ENCODE measurements at regions of chr6 and their contacts with region 1.

Region 1: DNA sequence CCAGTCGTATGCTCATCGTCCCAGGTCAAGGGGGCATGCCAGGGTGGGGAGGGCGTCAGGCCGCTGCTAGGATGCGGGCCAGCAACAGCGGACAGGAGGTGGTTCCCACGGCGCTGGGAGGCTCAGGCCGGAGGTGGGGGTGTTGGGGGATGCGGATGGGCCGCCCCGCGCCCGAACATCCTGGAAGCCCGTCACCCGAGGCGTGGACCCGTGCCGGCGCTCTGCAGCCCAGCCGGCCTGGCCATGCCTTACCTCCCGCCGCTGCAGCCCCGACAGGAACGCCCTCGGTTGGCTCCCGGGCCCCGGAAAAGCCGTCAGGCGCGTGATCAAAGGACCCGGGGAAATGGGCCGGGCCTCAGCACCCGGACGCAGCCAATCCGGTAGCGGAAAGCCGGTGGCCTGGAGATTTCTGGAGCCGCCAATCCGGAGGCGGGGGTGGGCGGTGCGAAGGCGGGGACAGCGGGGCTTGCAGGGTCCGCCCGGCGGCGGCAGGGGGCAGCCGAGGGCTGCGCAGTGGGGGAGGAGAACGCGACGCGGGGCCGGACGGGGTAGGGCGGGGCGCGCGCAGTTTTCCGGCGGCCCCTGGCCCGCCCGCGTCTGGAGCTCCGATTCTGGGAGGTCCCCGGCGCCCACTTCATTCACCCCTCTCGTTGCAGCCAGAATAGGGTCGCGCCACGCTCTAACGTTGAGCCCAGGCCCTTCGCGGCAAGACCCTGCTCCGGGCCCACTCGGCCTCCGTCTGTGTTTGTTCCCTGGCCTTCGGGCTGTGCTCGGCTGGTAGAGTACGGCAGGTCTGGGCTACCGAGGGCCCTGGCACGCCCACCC is at the start of gene SMIM29:
- DNase-seq: peak; percentile 96 to 98 (median 97)
- ATAC-seq: peak; percentile 84
- H3K4me3 ChIP-seq: peak within 1 kb of the TSS; percentile 76
- H3K27ac ChIP-seq: peak within 1 kb of the TSS; percentile 88
- H3K4me1 ChIP-seq: peaks cover 36 to 50% of the 10 kb centered on the region in 2 experiments
- H3K27me3 ChIP-seq: no peaks in the 10 kb centered on the region; a peak in 1 of 5 replicates
- CTCF ChIP-seq: peak; percentile 85 to 96 (median 95)
- EP300 ChIP-seq: peak; percentile 54; the same call in 1 of the 2 replicates
- POLR2A ChIP-seq: peak; percentile 85
- RAD21 ChIP-seq: peak; percentile 97 to 99
- polyA plus RNA-seq, gene SMIM29: 13.1 to 13.7 TPM

Region 2: DNA sequence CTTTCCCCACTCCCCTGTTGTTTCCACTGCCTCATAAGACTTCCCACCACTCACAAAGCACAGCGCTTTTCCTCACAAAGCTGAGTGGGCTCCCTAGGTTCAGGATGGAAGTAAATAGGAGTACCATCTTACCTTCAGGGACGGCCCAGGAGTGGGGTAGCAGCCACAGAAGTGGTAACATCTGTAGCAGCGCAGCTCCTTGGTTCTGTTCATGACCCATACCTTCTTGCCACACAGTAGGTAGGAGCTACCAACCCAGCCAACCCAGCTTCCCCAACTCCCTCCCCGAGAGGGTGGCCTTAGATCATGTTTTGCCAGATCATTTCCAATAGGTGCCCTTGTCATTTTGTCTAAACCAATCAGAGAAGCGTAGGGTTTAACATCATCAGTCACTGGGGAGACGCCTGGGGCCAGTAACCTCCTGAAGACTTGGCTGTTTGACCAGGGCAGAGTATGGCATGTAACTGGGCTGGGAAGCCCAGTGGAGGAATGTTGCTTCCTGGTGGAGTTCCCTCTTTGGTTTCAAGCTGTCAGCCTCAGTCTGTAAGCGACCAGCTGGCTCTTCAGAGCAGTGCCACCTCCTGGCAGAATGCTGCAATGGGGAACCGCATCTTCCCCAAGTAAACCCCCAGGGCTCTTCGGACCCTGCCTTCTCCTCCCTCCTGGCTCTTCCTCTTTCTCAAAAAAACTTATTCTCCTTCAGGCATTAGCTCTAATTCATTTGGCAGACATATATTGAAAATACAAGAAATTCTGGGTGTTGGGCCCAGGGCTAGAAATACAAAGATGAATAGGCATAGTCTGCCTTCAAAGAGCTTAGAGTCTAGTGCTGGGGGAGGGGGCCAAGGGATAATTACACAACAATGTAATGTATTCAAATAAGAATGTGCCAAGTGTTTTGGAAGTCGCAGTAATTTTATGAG is 1295.9 kb before region 1 on chr6 and contains the start of gene HLA-DMA:
- CTCF ChIA-PET with region 1: no interaction called
- POLR2A ChIA-PET with region 1: no interaction called
- in situ Hi-C with region 1: no loop called
- intact Hi-C with region 1: no loop called
- DNase-seq: peak; percentile 55 to 71 (median 64)
- ATAC-seq: peak; percentile 91
- H3K4me3 ChIP-seq: no peak within 1 kb of the TSS
- H3K27ac ChIP-seq: no peak within 1 kb of the TSS
- H3K4me1 ChIP-seq: no peaks in the 10 kb centered on the region; a peak in 1 of 5 replicates
- H3K27me3 ChIP-seq: peaks cover 2 to 27% of the 10 kb centered on the region in 2 experiments; a peak in 3 of 5 replicates
- CTCF ChIP-seq: peak; percentile 67 to 80 (median 71)
- EP300 ChIP-seq: no peak
- POLR2A ChIP-seq: no peak
- RAD21 ChIP-seq: peak; percentile 21 to 46; a peak in 3 of 4 replicates
- polyA plus RNA-seq, gene HLA-DMA: 0.18 to 0.78 TPM

Region 3: GRCh38 chr6:34145161-34146020 is 103.5 kb before region 1 on chr6:
- CTCF ChIA-PET with region 1: no interaction called
- POLR2A ChIA-PET with region 1: no interaction called
- in situ Hi-C with region 1: no loop called
- intact Hi-C with region 1: no loop called
- DNase-seq: peak in 3 of 4 experiments; percentile 21 to 51 (median 48)
- ATAC-seq: no peak
- H3K4me3 ChIP-seq: no peak overlapping the region
- H3K27ac ChIP-seq: no peak overlapping the region
- H3K4me1 ChIP-seq: peaks cover 0 to 41% of the 10 kb centered on the region in 2 experiments; a peak in 2 of 5 replicates
- H3K27me3 ChIP-seq: peaks cover 18 to 75% of the 10 kb centered on the region in 2 experiments; a peak in 4 of 5 replicates
- CTCF ChIP-seq: no peak
- EP300 ChIP-seq: no peak
- POLR2A ChIP-seq: no peak
- RAD21 ChIP-seq: no peak

Region 4: GRCh38 chr6:34161857-34162515 is 87.0 kb before region 1 on chr6:
- CTCF ChIA-PET with region 1: no interaction called
- POLR2A ChIA-PET with region 1: interaction called, 7 read pairs
- in situ Hi-C with region 1: no loop called
- intact Hi-C with region 1: loop called (anchors 2 kb)
- DNase-seq: no peak
- ATAC-seq: no peak
- H3K4me3 ChIP-seq: no peak overlapping the region
- H3K27ac ChIP-seq: no peak overlapping the region
- H3K4me1 ChIP-seq: no peaks in the 10 kb centered on the region
- H3K27me3 ChIP-seq: peaks cover 8 to 20% of the 10 kb centered on the region in 2 experiments; a peak in 3 of 5 replicates
- CTCF ChIP-seq: no peak
- EP300 ChIP-seq: no peak
- POLR2A ChIP-seq: no peak
- RAD21 ChIP-seq: no peak

Region 5: GRCh38 chr6:34230672-34231371 is 18.1 kb before region 1 on chr6:
- CTCF ChIA-PET with region 1: no interaction called
- POLR2A ChIA-PET with region 1: interaction called, 10 read pairs
- in situ Hi-C with region 1: no loop called
- intact Hi-C with region 1: no loop called
- DNase-seq: no peak
- ATAC-seq: no peak
- H3K4me3 ChIP-seq: no peak overlapping the region
- H3K27ac ChIP-seq: 0 out of 3 replicates have a peak overlapping the region, but pooled peaks have one; percentile 33
- H3K4me1 ChIP-seq: peaks cover 25 to 38% of the 10 kb centered on the region in 2 experiments
- H3K27me3 ChIP-seq: no peaks in the 10 kb centered on the region
- CTCF ChIP-seq: no peak
- EP300 ChIP-seq: no peak
- POLR2A ChIP-seq: no peak
- RAD21 ChIP-seq: no peak

Region 6: GRCh38 chr6:34392497-34393190 is 143.7 kb after region 1 on chr6 and contains the start of gene NUDT3:
- CTCF ChIA-PET with region 1: interaction called, 15 read pairs
- POLR2A ChIA-PET with region 1: interaction called, 8 read pairs
- in situ Hi-C with region 1: no loop called
- intact Hi-C with region 1: loop called (anchors 2 kb)
- DNase-seq: peak; percentile 96 to 99 (median 96)
- ATAC-seq: peak; percentile 90
- H3K4me3 ChIP-seq: peak within 1 kb of the TSS; percentile 91
- H3K27ac ChIP-seq: peak within 1 kb of the TSS; percentile 96
- H3K4me1 ChIP-seq: peaks cover 17 to 19% of the 10 kb centered on the region in 2 experiments; a peak in 4 of 5 replicates
- H3K27me3 ChIP-seq: no peaks in the 10 kb centered on the region
- CTCF ChIP-seq: peak; percentile 92 to 95 (median 93)
- EP300 ChIP-seq: peak; percentile 50
- POLR2A ChIP-seq: no peak
- RAD21 ChIP-seq: peak; percentile 86 to 89
- polyA plus RNA-seq, gene NUDT3: 5.4 to 57.7 TPM

Region 7: DNA sequence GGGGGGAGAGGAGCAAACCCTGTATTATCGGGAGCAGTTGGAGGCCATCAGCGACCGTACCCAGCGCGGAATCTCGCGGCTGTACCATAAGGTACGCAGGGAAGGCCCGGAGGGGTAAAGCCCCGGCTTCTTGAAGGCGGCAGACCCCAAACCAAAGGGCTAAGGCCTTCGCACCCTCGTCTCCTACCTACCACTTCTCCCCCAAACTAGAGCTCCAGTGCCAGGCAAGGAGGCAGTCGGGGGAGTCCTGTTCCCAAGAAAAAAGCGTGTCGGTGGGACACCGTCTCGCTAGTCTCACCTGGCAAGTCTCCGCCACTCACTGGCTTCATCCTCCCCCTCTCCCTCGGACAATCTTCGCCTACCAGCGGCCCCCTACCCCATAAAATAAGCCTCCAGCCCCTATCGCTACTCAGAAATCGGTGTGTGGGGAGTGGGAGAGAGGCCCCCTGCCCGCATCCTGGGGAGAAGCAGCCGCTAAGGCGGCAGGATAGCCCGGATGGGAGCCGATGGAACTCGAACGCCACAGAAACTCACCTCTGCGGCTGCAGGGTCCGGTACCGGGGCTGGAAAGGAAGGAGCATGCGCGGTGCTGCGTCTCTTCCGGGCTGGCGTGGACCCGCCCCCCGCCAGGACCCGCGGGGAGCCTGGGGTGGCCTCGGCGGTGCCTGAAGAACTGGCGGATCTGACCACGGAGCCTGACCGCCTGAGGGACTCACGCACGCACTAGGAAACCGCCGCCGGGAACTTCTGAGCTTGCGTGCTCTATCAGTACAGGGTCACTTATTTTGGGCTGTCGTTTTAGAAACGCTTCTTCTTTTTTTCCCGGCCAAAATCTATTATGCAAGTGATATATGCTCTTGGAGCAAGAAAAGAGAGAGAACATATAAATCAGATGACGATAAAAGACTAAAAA is 176.8 kb after region 1 on chr6 and contains the start of gene RPS10:
- CTCF ChIA-PET with region 1: interaction called, 4 read pairs
- POLR2A ChIA-PET with region 1: interaction called, 33 read pairs
- in situ Hi-C with region 1: no loop called
- intact Hi-C with region 1: no loop called
- DNase-seq: peak; percentile 99 to 100 (median 100)
- ATAC-seq: peak; percentile 94
- H3K4me3 ChIP-seq: peak within 1 kb of the TSS; percentile 65
- H3K27ac ChIP-seq: peak within 1 kb of the TSS; percentile 81
- H3K4me1 ChIP-seq: peaks cover 10 to 20% of the 10 kb centered on the region in 2 experiments; a peak in 4 of 5 replicates
- H3K27me3 ChIP-seq: no peaks in the 10 kb centered on the region
- CTCF ChIP-seq: peak in 2 of 3 experiments; percentile 34 to 37; a peak in 4 of 6 replicates
- EP300 ChIP-seq: no peak
- POLR2A ChIP-seq: peak; percentile 99
- RAD21 ChIP-seq: peak; percentile 11 to 38; a peak in 2 of 4 replicates
- polyA plus RNA-seq, gene RPS10: 2,680 to 3,048 TPM

Region 8: GRCh38 chr6:34546551-34547321 is 297.8 kb after region 1 on chr6:
- CTCF ChIA-PET with region 1: no interaction called
- POLR2A ChIA-PET with region 1: no interaction called
- in situ Hi-C with region 1: no loop called
- intact Hi-C with region 1: no loop called
- DNase-seq: no peak
- ATAC-seq: no peak
- H3K4me3 ChIP-seq: no peak overlapping the region
- H3K27ac ChIP-seq: no peak overlapping the region
- H3K4me1 ChIP-seq: peaks cover 24 to 65% of the 10 kb centered on the region in 2 experiments
- H3K27me3 ChIP-seq: no peaks in the 10 kb centered on the region
- CTCF ChIP-seq: no peak
- EP300 ChIP-seq: no peak
- POLR2A ChIP-seq: no peak
- RAD21 ChIP-seq: no peak